ENCODE measurements at regions of chr15 and their contacts with region 1.

Region 1: GRCh38 chr15:84669726-84670125 is 11.7 kb upstream of the NMB start:
- DNase-seq: peak; percentile 77
- ATAC-seq: peak; percentile 27
- H3K4me3 Mint-ChIP-seq: no peak overlapping the region
- H3K27ac Mint-ChIP-seq: peak overlapping the region; percentile 64
- H3K4me1 Mint-ChIP-seq: peaks cover 56% of the 10 kb centered on the region
- H3K27me3 Mint-ChIP-seq: no peaks in the 10 kb centered on the region

Region 2: GRCh38 chr15:84570164-84570735 is 99.5 kb before region 1 on chr15:
- CTCF ChIA-PET with region 1: no interaction called
- POLR2A ChIA-PET with region 1: no interaction called
- intact Hi-C with region 1: no loop called
- DNase-seq: peak; percentile 69
- ATAC-seq: peak; percentile 43
- H3K4me3 Mint-ChIP-seq: peak overlapping the region; percentile 73
- H3K27ac Mint-ChIP-seq: peak overlapping the region; percentile 77
- H3K4me1 Mint-ChIP-seq: peaks cover 20% of the 10 kb centered on the region
- H3K27me3 Mint-ChIP-seq: peaks cover 2% of the 10 kb centered on the region

Region 3: GRCh38 chr15:84647726-84648125 is 22.0 kb before region 1 on chr15:
- CTCF ChIA-PET with region 1: no interaction called
- POLR2A ChIA-PET with region 1: no interaction called
- intact Hi-C with region 1: no loop called
- DNase-seq: no peak
- ATAC-seq: no peak
- H3K4me3 Mint-ChIP-seq: no peak overlapping the region
- H3K27ac Mint-ChIP-seq: peak overlapping the region; percentile 18
- H3K4me1 Mint-ChIP-seq: peaks cover 21% of the 10 kb centered on the region
- H3K27me3 Mint-ChIP-seq: no peaks in the 10 kb centered on the region

Region 4: DNA sequence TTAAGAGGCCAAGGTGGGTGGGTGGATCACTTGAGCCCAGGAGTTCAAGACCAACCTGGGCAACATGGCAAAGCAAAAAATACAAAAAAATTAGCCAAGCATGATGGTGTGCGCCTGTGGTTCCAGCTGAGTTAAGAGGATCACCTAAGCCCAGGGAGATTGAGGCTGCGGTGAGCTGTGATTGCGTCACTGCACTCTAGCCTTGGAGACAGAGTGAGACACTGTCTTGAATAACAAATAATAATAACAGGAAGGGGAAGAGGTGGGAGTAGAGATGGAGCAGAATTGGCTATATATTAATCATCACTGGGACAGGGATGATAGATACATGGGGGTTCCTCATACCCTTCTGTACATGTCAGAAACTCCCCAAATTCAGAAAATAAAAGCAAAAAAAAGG is 12.1 kb after region 1 on chr15:
- CTCF ChIA-PET with region 1: interaction called, 3 read pairs
- POLR2A ChIA-PET with region 1: interaction called, 3 read pairs
- intact Hi-C with region 1: loop called in 1 of 2 experiments (anchors 1 kb)
- DNase-seq: peak; percentile 78
- ATAC-seq: peak; percentile 91
- H3K4me3 Mint-ChIP-seq: no peak overlapping the region
- H3K27ac Mint-ChIP-seq: peak overlapping the region; percentile 77
- H3K4me1 Mint-ChIP-seq: peaks cover 27% of the 10 kb centered on the region
- H3K27me3 Mint-ChIP-seq: no peaks in the 10 kb centered on the region

Region 5: DNA sequence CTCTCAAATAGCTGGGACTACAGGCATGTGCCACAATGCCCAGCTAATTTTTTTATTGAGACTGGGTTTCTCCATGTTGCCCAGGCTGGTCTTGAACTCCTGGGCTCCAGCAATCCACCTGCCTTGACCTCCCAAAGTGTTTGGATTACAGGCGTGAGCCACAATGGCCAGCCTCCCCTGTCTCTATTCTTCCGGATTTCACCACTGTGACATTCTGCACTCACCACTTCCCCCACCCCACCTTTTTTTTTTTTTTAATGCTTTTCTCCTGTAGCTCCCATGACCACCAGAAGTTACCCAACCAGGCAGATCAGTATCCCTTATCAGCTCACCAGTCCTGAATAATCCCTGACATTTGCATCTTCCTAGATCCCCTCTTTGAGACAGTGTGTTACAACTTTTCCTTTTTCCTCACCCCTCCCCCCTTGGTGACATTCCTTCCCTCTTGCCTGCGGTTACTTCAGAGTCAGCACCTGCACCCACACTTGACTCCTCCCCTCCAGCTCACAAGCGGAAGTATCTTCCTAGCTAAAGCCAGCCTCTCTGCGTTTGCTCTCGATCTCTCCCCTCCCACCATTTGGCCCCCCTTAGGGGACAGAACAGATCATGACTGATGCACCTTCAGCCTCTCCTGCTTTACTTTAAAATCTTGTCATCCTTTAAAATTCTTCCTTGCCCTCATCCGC is 65.2 kb after region 1 on chr15:
- CTCF ChIA-PET with region 1: interaction called, 3 read pairs
- POLR2A ChIA-PET with region 1: no interaction called
- intact Hi-C with region 1: loop called in 1 of 2 experiments (anchors 1 kb)
- DNase-seq: peak; percentile 87
- ATAC-seq: peak; percentile 72
- H3K4me3 Mint-ChIP-seq: peak overlapping the region; percentile 59
- H3K27ac Mint-ChIP-seq: peak overlapping the region; percentile 97
- H3K4me1 Mint-ChIP-seq: peaks cover 63% of the 10 kb centered on the region
- H3K27me3 Mint-ChIP-seq: no peaks in the 10 kb centered on the region

Region 6: DNA sequence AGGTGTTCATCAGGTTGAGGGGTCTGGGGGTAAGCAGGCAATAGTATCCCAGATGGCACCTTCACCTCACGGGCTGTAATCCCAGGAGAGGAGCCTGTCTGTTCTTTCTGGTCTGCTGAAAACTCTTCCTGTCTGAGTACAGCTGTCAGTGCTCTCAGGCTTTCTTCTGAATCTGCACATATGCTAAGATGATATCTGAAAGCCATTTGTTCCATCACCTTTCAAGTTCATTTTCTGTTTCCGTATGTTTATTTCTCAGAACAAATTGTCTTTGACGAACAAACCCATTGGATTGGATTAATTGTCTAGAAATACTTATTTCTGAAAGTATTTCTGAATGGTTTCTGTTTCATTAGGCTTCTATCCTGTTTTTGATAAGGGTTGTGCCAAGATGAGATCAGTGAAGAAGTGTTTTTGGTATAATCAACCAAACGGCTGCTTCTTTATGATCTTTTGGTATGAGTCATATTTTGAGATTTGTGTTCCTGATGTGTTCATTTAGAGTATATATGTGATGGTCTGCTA is 91.9 kb after region 1 on chr15:
- CTCF ChIA-PET with region 1: interaction called, 4 read pairs
- POLR2A ChIA-PET with region 1: no interaction called
- intact Hi-C with region 1: loop called (anchors 1 to 5 kb)
- DNase-seq: peak; percentile 28
- ATAC-seq: peak; percentile 83
- H3K4me3 Mint-ChIP-seq: no peak overlapping the region
- H3K27ac Mint-ChIP-seq: no peak overlapping the region
- H3K4me1 Mint-ChIP-seq: peaks cover 14% of the 10 kb centered on the region
- H3K27me3 Mint-ChIP-seq: no peaks in the 10 kb centered on the region